SK-N-SH (cell line): ENCODE measurements at regions of chr6 and their contacts with region 1.

Region 1: GRCh38 chr6:73610444-73611275 is 43.1 kb downstream of the SLC17A5 start:
- DNase-seq: peak; percentile 42
- H3K4me3 ChIP-seq: no peak overlapping the region
- H3K27ac ChIP-seq: no peak overlapping the region
- H3K4me1 ChIP-seq: no peaks in the 10 kb centered on the region
- H3K27me3 ChIP-seq: no peaks in the 10 kb centered on the region
- CTCF ChIP-seq: peak; percentile 80
- EP300 ChIP-seq: no peak
- RAD21 ChIP-seq: peak; percentile 76

Region 2: DNA sequence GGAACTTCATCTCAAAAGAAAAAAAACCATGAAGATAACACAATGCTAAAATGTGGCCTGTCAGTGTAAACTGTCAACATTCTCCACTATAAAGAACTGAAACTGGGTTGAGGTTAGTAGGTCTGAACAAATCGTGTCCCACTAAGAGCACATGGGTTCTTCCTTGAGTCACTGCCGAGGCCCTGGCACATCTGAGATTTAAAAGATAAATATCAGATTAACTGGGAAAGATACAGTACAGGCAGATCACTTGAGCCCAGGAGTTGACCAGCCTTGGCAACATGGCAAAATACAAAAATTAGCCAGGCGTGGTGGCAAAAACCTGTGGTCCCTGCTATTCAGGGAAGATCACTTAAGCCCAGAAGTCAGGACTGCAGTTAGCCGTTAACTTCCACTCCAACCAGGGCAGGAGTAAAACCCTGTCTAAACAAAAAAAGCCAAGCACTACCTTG is 95.4 kb before region 1 on chr6:
- CTCF ChIA-PET with region 1: interaction called, 22 read pairs
- POLR2A ChIA-PET with region 1: interaction called, 9 read pairs
- DNase-seq: no peak
- H3K4me3 ChIP-seq: no peak overlapping the region; a peak in 1 of 4 replicates
- H3K27ac ChIP-seq: peak overlapping the region; percentile 43 to 97
- H3K4me1 ChIP-seq: peaks cover 14 to 16% of the 10 kb centered on the region in 2 experiments; a peak in 3 of 4 replicates
- H3K27me3 ChIP-seq: no peaks in the 10 kb centered on the region
- CTCF ChIP-seq: no peak
- EP300 ChIP-seq: no peak
- RAD21 ChIP-seq: no peak

Region 3: GRCh38 chr6:73558624-73559398 is 51.8 kb before region 1 on chr6:
- CTCF ChIA-PET with region 1: interaction called, 11 read pairs
- POLR2A ChIA-PET with region 1: no interaction called
- DNase-seq: no peak
- H3K4me3 ChIP-seq: no peak overlapping the region
- H3K27ac ChIP-seq: no peak overlapping the region
- H3K4me1 ChIP-seq: peaks cover 0 to 3% of the 10 kb centered on the region in 2 experiments; a peak in 1 of 4 replicates
- H3K27me3 ChIP-seq: no peaks in the 10 kb centered on the region
- CTCF ChIP-seq: no peak
- EP300 ChIP-seq: no peak
- RAD21 ChIP-seq: no peak

Region 4: DNA sequence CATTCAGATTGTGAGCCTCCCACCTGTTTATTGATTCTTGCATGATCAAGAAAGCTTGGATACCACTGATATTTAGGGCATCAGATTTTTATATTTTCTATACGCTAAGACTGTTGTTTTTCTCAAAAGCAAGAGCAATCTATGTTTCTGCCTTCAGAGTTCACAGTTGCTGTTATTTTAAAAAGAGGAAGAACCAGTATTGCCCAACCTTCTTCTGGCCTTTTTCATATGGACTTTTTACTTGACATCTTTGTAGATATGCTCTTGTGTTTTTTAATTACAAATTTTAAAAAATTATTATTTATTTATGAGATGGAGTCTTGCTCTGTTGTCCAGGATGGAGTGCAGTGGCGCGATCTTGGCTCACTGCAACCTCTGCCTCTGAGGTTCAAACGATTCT is 14.2 kb after region 1 on chr6:
- CTCF ChIA-PET with region 1: interaction called, 14 read pairs
- POLR2A ChIA-PET with region 1: no interaction called
- DNase-seq: no peak
- H3K4me3 ChIP-seq: no peak overlapping the region
- H3K27ac ChIP-seq: no peak overlapping the region
- H3K4me1 ChIP-seq: no peaks in the 10 kb centered on the region
- H3K27me3 ChIP-seq: no peaks in the 10 kb centered on the region
- CTCF ChIP-seq: no peak
- EP300 ChIP-seq: no peak
- RAD21 ChIP-seq: no peak

Region 5: GRCh38 chr6:73798592-73798991 is 187.9 kb after region 1 on chr6:
- CTCF ChIA-PET with region 1: no interaction called
- POLR2A ChIA-PET with region 1: no interaction called
- DNase-seq: no peak
- H3K4me3 ChIP-seq: no peak overlapping the region
- H3K27ac ChIP-seq: peak overlapping the region in 1 of 2 experiments; percentile 47; a peak in 2 of 4 replicates
- H3K4me1 ChIP-seq: peaks cover 0 to 10% of the 10 kb centered on the region in 2 experiments; a peak in 2 of 4 replicates
- H3K27me3 ChIP-seq: no peaks in the 10 kb centered on the region
- CTCF ChIP-seq: peak; percentile 52
- EP300 ChIP-seq: no peak
- RAD21 ChIP-seq: no peak